Activated CD4-positive, alpha-beta memory T cell treated with anti-CD3 and anti-CD28 coated beads, Interleukin-2, amount 10 ng/mL, durations not matched to agents 7 days and 5 days (primary cell): ENCODE measurements at regions of chr21 and their contacts with region 1.

Region 1: DNA sequence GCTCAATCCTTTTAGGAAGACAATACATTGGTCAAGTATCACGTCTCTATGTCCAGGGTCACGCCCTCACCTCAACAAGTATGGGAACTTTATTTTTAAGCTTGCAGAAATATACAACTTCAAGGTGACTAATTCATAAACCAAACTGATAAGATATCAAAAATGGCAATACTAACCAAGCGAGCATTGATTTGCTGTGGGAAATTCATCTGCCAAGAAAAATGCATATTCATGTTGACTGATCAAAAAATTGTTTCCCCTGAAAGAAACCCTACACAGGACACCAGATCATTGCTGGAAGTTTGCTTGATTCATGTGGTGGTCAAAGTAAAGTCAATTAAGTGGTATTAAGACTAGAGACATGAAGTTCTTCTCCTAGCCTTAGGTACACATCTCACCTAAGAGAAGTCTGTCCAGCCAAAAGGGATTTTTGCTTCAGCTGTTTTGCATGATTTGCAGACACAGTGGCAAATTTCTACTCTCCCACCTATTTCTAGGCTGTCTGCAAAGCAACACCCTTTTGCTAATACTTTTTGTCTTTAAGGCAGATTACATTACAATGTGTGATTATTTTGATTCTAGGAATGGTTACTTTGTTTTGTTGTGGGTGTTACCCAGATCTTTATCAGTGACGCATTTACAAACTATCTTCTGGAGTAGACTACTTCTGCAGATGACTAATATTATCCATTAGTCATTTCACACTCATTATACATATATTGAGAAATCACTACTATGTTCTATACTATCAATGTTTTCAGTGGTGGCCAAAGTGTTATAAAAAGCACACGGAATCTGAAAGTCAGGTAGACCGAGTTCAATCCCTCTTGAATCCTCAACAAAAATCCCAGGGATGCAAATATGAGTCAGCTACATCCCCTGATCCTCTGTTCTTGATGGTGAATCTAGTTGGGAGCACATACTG is 12.3 kb downstream of the SAMSN1 start:
- DNase-seq: no peak
- H3K4me3 Mint-ChIP-seq: peak overlapping the region; percentile 81
- H3K27ac Mint-ChIP-seq: peak overlapping the region; percentile 97
- H3K4me1 Mint-ChIP-seq: peaks cover 77% of the 10 kb centered on the region
- H3K27me3 Mint-ChIP-seq: no peaks in the 10 kb centered on the region

Region 2: DNA sequence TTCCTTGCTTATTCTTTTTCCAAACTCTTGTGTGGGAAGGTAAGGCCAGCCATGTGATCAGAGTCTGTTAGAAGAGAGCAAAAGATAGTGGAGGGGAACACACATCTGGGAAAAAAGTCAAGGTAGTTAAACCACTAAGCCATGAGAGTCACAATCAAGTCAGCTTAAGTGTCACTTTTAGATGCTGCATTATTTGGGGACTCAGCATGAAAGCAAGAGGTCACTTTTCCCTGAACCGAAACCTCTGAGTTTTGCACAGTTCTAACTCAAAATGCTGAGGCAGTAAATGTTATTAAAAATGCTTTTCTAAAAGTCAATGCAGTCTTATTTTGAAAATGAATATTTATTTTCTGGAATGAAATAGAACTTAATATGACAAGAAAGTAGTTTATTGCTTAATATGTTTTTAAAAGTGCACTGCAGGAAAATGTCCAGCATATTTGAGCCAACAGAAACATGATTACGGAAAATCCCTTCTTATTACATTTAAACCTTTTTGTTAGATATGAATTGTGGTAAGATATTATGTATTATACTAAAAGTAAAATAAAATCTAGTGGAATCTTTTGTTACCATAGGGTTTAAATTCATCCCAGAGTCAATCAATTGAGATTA is 248.5 kb before region 1 on chr21:
- CTCF ChIA-PET with region 1: no interaction called
- POLR2A ChIA-PET with region 1: no interaction called
- DNase-seq: no peak
- H3K4me3 Mint-ChIP-seq: no peak overlapping the region
- H3K27ac Mint-ChIP-seq: no peak overlapping the region
- H3K4me1 Mint-ChIP-seq: no peaks in the 10 kb centered on the region
- H3K27me3 Mint-ChIP-seq: peaks cover 12% of the 10 kb centered on the region

Region 3: GRCh38 chr21:14523234-14523633 is 10.5 kb before region 1 on chr21:
- CTCF ChIA-PET with region 1: interaction called, 3 read pairs
- POLR2A ChIA-PET with region 1: interaction called, 13 read pairs
- DNase-seq: peak; percentile 59
- H3K4me3 Mint-ChIP-seq: peak overlapping the region; percentile 60
- H3K27ac Mint-ChIP-seq: peak overlapping the region; percentile 75
- H3K4me1 Mint-ChIP-seq: peaks cover 66% of the 10 kb centered on the region
- H3K27me3 Mint-ChIP-seq: no peaks in the 10 kb centered on the region

Region 4: GRCh38 chr21:14545906-14546480 is 12.2 kb after region 1 on chr21 and contains the start of gene SAMSN1:
- CTCF ChIA-PET with region 1: interaction called, 11 read pairs
- POLR2A ChIA-PET with region 1: interaction called, 196 read pairs
- DNase-seq: peak; percentile 83
- H3K4me3 Mint-ChIP-seq: peak within 1 kb of the TSS; percentile 98
- H3K27ac Mint-ChIP-seq: peak within 1 kb of the TSS; percentile 87
- H3K4me1 Mint-ChIP-seq: peaks cover 62% of the 10 kb centered on the region
- H3K27me3 Mint-ChIP-seq: no peaks in the 10 kb centered on the region
- total RNA-seq, gene SAMSN1: 87.1 to 91.0 TPM

Region 5: GRCh38 chr21:14602382-14602958 is 68.7 kb after region 1 on chr21:
- CTCF ChIA-PET with region 1: no interaction called
- POLR2A ChIA-PET with region 1: no interaction called
- DNase-seq: no peak
- H3K4me3 Mint-ChIP-seq: peak overlapping the region; percentile 30
- H3K27ac Mint-ChIP-seq: no peak overlapping the region
- H3K4me1 Mint-ChIP-seq: peaks cover 25% of the 10 kb centered on the region
- H3K27me3 Mint-ChIP-seq: no peaks in the 10 kb centered on the region

Region 6: DNA sequence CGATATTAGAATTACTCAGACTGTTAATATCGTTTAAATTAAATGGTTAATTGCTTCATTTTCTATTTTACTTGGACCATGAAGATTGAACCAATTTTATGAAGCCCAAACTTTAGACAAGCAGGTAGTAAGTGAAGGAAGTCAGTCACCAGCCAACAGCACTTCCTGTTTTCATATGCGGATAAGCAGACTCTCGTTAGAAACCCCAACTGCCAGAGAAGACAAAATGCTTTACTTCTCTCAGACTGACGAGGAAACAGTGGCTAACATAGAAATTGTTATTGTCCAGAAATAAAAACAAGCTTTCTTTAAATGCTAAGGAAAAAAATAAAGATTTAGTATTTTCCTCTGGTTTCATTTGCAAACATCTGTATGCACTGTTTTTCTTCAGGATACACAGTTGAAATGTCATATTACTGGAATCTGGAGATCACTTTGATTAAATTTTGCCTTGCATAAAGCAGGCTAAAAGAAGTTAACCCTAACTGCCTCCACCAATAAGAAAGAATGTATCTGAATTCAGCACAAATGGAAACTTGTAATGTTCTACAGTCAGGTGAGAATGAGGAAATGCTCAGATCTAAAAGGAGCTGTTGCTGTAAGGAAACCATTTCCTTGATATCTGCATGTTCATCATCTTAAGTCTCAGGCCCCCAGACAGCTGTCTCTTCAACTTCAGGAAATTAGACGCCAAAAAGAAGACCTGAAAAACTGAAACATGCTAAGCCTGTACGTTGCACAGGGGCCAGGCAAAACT is 142.2 kb after region 1 on chr21:
- CTCF ChIA-PET with region 1: no interaction called
- POLR2A ChIA-PET with region 1: interaction called, 12 read pairs
- DNase-seq: peak; percentile 23
- H3K4me3 Mint-ChIP-seq: peak overlapping the region; percentile 40
- H3K27ac Mint-ChIP-seq: peak overlapping the region; percentile 98
- H3K4me1 Mint-ChIP-seq: peaks cover 31% of the 10 kb centered on the region
- H3K27me3 Mint-ChIP-seq: no peaks in the 10 kb centered on the region